PC-3 (cell line): ENCODE measurements at regions of chr10 and their contacts with region 1.

Region 1: DNA sequence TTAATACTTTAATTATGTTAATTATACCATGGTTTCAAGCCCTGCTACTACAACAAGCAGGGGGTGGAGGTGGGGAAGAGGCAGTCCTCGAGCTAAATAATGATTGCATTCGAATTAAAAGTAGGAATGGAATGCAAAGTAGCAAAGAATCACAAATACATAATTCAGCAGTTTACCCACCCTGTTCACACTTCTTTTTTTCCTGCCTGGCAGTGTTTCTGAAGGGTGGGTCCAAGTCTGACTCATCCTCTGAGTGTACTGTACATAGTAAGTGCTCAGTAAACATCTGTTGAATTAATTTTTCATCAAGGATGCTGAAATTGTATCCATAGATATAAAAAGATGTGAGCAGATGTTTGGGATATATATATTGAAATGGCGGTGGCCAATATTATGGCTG is 778.8 kb downstream of the LRMDA start:
- DNase-seq: peak; percentile 47
- ATAC-seq: 0 out of 2 replicates have a peak, but pooled peaks have one; percentile 19
- H3K4me3 ChIP-seq: no peak overlapping the region
- H3K27ac ChIP-seq: no peak overlapping the region
- H3K4me1 ChIP-seq: peaks cover 7% of the 10 kb centered on the region
- H3K27me3 ChIP-seq: peaks cover 44% of the 10 kb centered on the region
- CTCF ChIP-seq: no peak

Region 2: GRCh38 chr10:76160446-76161300 is 49.5 kb before region 1 on chr10:
- CTCF ChIA-PET with region 1: no interaction called
- POLR2A ChIA-PET with region 1: no interaction called
- intact Hi-C with region 1: loop called (anchors 5 kb)
- DNase-seq: no peak
- ATAC-seq: no peak
- H3K4me3 ChIP-seq: no peak overlapping the region
- H3K27ac ChIP-seq: no peak overlapping the region
- H3K4me1 ChIP-seq: no peaks in the 10 kb centered on the region
- H3K27me3 ChIP-seq: peaks cover 71% of the 10 kb centered on the region
- CTCF ChIP-seq: no peak

Region 3: DNA sequence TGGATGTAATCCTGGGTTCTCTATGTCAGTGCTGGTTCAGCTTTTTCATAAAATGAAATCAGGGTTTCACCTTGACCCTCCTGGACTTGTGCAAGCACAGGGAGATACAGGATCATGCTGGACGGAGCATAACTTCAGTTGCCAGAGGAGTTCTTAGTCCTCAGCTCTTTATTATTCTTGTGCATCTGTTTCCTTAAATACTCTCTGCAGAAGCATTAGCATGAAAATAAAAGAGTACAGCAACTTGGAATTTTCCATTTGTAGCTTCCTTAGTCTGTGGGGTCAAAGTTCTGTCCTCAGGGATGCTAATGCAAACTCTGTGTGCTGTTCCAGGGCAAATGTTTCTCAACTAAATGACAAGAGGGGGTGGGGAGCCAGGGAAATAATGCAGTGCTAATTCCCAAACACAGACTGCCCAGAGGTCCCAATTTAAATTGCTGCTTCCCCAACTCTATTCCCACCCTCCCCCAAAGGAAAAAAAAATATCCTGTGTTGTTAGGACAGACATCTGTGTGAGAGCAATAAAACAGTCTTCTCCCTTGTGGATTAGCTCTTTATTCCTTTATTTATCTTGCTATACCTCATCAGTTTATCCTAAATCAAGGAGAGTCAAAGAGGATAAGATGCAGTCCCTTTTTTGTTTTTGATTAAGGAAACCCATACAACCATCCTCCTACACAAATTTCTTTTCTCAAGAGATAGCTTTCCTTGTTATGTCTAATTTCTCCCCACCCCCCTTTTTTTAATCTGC is 126.2 kb after region 1 on chr10:
- CTCF ChIA-PET with region 1: no interaction called
- POLR2A ChIA-PET with region 1: no interaction called
- intact Hi-C with region 1: no loop called
- DNase-seq: no peak
- ATAC-seq: no peak
- H3K4me3 ChIP-seq: no peak overlapping the region
- H3K27ac ChIP-seq: no peak overlapping the region
- H3K4me1 ChIP-seq: peaks cover 16% of the 10 kb centered on the region
- H3K27me3 ChIP-seq: no peaks in the 10 kb centered on the region
- CTCF ChIP-seq: no peak

Region 4: GRCh38 chr10:76657337-76658012 is 447.3 kb after region 1 on chr10:
- CTCF ChIA-PET with region 1: no interaction called
- POLR2A ChIA-PET with region 1: no interaction called
- intact Hi-C with region 1: no loop called
- DNase-seq: no peak
- ATAC-seq: no peak
- H3K4me3 ChIP-seq: no peak overlapping the region
- H3K27ac ChIP-seq: no peak overlapping the region
- H3K4me1 ChIP-seq: no peaks in the 10 kb centered on the region
- H3K27me3 ChIP-seq: peaks cover 40% of the 10 kb centered on the region
- CTCF ChIP-seq: no peak